Naive thymus-derived CD4-positive, alpha-beta T cell (primary cell): ENCODE measurements at regions of chr2 and their contacts with region 1.

Region 1: GRCh38 chr2:206800506-206801417 is 35.4 kb downstream of the FASTKD2 start:
- DNase-seq: peak in 8 of 9 donors; percentile 20 to 61 (median 53)
- ATAC-seq: peak; percentile 67
- H3K4me3 ChIP-seq: no peak overlapping the region
- H3K4me3 Mint-ChIP-seq: peak overlapping the region; percentile 52 to 85 (median 79)
- H3K27ac ChIP-seq: peak overlapping the region; percentile 23
- H3K27ac Mint-ChIP-seq: peak overlapping the region; percentile 1 to 86 (median 37)
- H3K4me1 ChIP-seq: peaks cover 0 to 4% of the 10 kb centered on the region in 2 donors
- H3K4me1 Mint-ChIP-seq: peaks cover 15 to 32% (median 24%) of the 10 kb centered on the region in 7 donors
- H3K27me3 ChIP-seq: no peaks in the 10 kb centered on the region
- H3K27me3 Mint-ChIP-seq: no peaks in the 10 kb centered on the region

Region 2: DNA sequence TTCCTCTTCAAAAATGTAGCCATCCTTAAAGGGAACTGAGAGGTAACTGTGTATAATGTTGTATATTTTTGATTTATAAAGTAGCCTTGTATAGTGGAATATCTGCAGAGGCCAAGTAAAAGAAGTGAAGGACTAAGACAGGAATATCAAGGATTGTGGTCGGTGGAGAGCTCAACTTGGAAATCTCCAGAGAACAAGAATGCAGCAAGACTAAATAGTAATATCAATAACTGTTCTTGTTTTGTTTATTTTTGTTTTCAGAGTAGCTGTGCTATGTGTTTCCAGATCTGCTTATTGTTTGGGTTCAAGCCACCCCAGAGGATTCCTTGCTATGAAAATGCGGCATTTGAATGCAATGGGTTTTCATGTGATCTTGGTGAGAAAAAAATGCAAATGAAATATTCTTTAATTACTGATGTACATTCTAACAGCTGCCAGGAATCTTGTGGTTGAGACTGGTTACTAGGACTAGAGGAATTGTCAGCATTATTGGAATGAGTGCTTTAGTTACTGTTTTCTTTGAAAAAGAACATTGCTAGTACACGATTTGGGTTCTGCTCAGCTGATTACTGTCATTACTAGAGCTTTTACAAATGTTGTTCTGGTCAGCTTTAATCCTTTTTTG is 10.3 kb before region 1 on chr2:
- CTCF ChIA-PET with region 1: interaction called, 10 read pairs
- POLR2A ChIA-PET with region 1: no interaction called
- intact Hi-C with region 1: no loop called
- DNase-seq: no peak
- ATAC-seq: no peak
- H3K4me3 ChIP-seq: no peak overlapping the region
- H3K4me3 Mint-ChIP-seq: no peak overlapping the region
- H3K27ac ChIP-seq: no peak overlapping the region
- H3K27ac Mint-ChIP-seq: peak overlapping the region in 1 of 9 donors; percentile 58
- H3K4me1 ChIP-seq: no peaks in the 10 kb centered on the region
- H3K4me1 Mint-ChIP-seq: peaks cover 0 to 4% (median 0%) of the 10 kb centered on the region in 7 donors
- H3K27me3 ChIP-seq: no peaks in the 10 kb centered on the region
- H3K27me3 Mint-ChIP-seq: no peaks in the 10 kb centered on the region

Region 3: DNA sequence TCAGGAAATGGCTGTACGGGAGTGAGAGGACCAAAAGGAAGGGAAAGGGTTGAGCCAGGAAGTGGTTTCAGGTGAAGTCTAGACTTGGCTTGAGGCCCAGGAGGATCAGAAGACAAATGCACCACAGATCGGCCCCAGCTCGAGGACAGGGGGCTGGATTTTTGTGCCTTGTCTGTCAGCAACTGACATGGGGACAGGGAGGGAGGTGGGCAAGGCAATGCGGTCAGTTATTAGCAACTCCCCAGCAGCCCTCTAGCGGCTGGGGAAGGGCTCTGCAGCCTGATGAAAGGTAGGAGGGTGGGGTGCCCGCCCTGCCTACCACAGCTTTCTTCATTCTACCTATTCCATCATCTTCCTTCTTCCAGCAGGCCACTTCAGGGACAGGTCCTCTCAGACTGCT is 188.5 kb after region 1 on chr2:
- CTCF ChIA-PET with region 1: no interaction called
- POLR2A ChIA-PET with region 1: no interaction called
- intact Hi-C with region 1: loop called in 1 of 2 experiments (anchors 2 kb)
- DNase-seq: no peak
- ATAC-seq: peak; percentile 70
- H3K4me3 ChIP-seq: no peak overlapping the region
- H3K4me3 Mint-ChIP-seq: peak overlapping the region in 5 of 10 donors; percentile 12 to 63 (median 47)
- H3K27ac ChIP-seq: no peak overlapping the region
- H3K27ac Mint-ChIP-seq: peak overlapping the region in 7 of 9 donors; percentile 5 to 81 (median 50)
- H3K4me1 ChIP-seq: peaks cover 0 to 5% of the 10 kb centered on the region in 2 donors
- H3K4me1 Mint-ChIP-seq: peaks cover 6 to 36% (median 23%) of the 10 kb centered on the region in 7 donors
- H3K27me3 ChIP-seq: no peaks in the 10 kb centered on the region
- H3K27me3 Mint-ChIP-seq: no peaks in the 10 kb centered on the region

Region 4: DNA sequence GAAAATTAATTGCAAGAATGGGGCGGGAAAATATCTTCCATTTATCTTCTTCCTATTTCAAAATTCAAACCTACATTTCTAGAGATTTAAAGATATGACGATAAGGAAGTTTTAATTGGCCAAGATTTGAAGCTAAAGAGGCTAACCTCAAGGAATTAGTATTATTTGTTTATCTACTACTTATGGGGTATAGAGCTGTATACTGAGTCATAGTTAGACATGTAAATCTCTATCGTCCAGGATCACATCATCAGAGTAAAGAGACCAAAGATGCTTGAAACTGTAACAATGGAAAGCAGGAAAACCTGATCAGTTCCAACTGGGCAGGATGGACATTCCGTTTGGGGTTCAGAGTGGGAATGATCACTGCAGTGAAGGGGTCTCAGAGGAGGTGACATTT is 460.2 kb after region 1 on chr2:
- CTCF ChIA-PET with region 1: no interaction called
- POLR2A ChIA-PET with region 1: no interaction called
- intact Hi-C with region 1: loop called in 1 of 2 experiments (anchors 1 kb)
- DNase-seq: no peak
- ATAC-seq: no peak
- H3K4me3 ChIP-seq: no peak overlapping the region
- H3K4me3 Mint-ChIP-seq: no peak overlapping the region
- H3K27ac ChIP-seq: no peak overlapping the region
- H3K27ac Mint-ChIP-seq: no peak overlapping the region
- H3K4me1 ChIP-seq: no peaks in the 10 kb centered on the region
- H3K4me1 Mint-ChIP-seq: no peaks in the 10 kb centered on the region
- H3K27me3 ChIP-seq: no peaks in the 10 kb centered on the region
- H3K27me3 Mint-ChIP-seq: peaks cover 0 to 4% (median 0%) of the 10 kb centered on the region in 5 donors

Region 5: GRCh38 chr2:207746131-207746530 is 945.4 kb after region 1 on chr2:
- CTCF ChIA-PET with region 1: no interaction called
- POLR2A ChIA-PET with region 1: no interaction called
- intact Hi-C with region 1: loop called in 1 of 2 experiments (anchors 10 kb)
- DNase-seq: peak in 7 of 9 donors; percentile 17 to 50 (median 34)
- ATAC-seq: peak; percentile 85
- H3K4me3 ChIP-seq: no peak overlapping the region
- H3K4me3 Mint-ChIP-seq: no peak overlapping the region
- H3K27ac ChIP-seq: no peak overlapping the region
- H3K27ac Mint-ChIP-seq: peak overlapping the region in 1 of 9 donors; percentile 20
- H3K4me1 ChIP-seq: no peaks in the 10 kb centered on the region
- H3K4me1 Mint-ChIP-seq: no peaks in the 10 kb centered on the region
- H3K27me3 ChIP-seq: no peaks in the 10 kb centered on the region
- H3K27me3 Mint-ChIP-seq: no peaks in the 10 kb centered on the region

Region 6: DNA sequence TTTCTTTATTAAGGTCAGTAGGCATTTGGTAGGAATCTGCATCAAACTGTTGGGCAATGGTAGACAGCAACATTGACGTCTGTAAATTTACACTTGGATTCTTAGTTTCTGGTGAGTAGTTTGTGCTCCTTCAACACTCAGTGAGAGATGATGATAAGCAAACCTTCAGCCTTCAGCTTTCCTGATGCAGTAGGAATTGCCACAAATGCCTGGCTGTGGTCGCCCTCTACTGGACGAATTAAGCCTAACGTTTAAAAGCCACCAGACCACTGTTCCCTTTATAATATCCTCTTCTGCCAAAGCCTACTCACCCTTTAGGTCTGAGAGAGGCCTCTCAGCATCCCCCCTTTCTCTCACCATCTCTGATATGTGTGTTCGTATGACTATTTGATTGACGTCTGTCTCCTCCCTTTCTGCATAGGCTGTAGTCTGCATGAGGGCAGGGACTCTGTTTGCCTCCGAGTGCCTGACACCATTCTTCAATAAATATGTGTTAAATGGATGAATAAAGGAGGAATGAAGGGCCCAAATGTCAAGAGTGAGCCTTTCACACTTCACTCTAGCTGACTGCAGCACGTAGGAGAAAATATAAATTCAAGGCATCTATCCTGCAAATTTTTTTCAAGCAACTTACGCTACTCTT is 1271.6 kb after region 1 on chr2:
- CTCF ChIA-PET with region 1: no interaction called
- POLR2A ChIA-PET with region 1: no interaction called
- intact Hi-C with region 1: loop called in 1 of 2 experiments (anchors 1 kb)
- DNase-seq: peak; percentile 15 to 62 (median 38)
- ATAC-seq: peak; percentile 78
- H3K4me3 ChIP-seq: no peak overlapping the region
- H3K4me3 Mint-ChIP-seq: no peak overlapping the region
- H3K27ac ChIP-seq: no peak overlapping the region
- H3K27ac Mint-ChIP-seq: no peak overlapping the region
- H3K4me1 ChIP-seq: no peaks in the 10 kb centered on the region
- H3K4me1 Mint-ChIP-seq: no peaks in the 10 kb centered on the region
- H3K27me3 ChIP-seq: peaks cover 0 to 3% of the 10 kb centered on the region in 2 donors
- H3K27me3 Mint-ChIP-seq: peaks cover 5 to 17% (median 10%) of the 10 kb centered on the region in 5 donors